ENCODE measurements at regions of chr7 and their contacts with region 1.

Region 1: GRCh38 chr7:38411404-38411803 is 138.0 kb upstream of the TARP start:
- DNase-seq: peak in 1 of 2 experiments; percentile 26
- H3K4me3 ChIP-seq: no peak overlapping the region
- H3K4me3 Mint-ChIP-seq: no peak overlapping the region
- H3K27ac Mint-ChIP-seq: no peak overlapping the region
- H3K4me1 ChIP-seq: no peaks in the 10 kb centered on the region
- H3K4me1 Mint-ChIP-seq: no peaks in the 10 kb centered on the region
- H3K27me3 ChIP-seq: no peaks in the 10 kb centered on the region
- H3K27me3 Mint-ChIP-seq: peaks cover 2% of the 10 kb centered on the region
- CTCF ChIP-seq: peak; percentile 18 to 58

Region 2: GRCh38 chr7:38360776-38361175 is 50.6 kb before region 1 on chr7:
- CTCF ChIA-PET with region 1: no interaction called
- POLR2A ChIA-PET with region 1: no interaction called
- intact Hi-C with region 1: no loop called
- DNase-seq: no peak
- H3K4me3 ChIP-seq: no peak overlapping the region
- H3K4me3 Mint-ChIP-seq: no peak overlapping the region
- H3K27ac Mint-ChIP-seq: no peak overlapping the region
- H3K4me1 ChIP-seq: no peaks in the 10 kb centered on the region
- H3K4me1 Mint-ChIP-seq: no peaks in the 10 kb centered on the region
- H3K27me3 ChIP-seq: no peaks in the 10 kb centered on the region
- H3K27me3 Mint-ChIP-seq: peaks cover under 1% of the 10 kb centered on the region
- CTCF ChIP-seq: no peak

Region 3: GRCh38 chr7:38398725-38399321 is 12.6 kb before region 1 on chr7:
- CTCF ChIA-PET with region 1: no interaction called
- POLR2A ChIA-PET with region 1: no interaction called
- intact Hi-C with region 1: loop called (anchors 1 kb)
- DNase-seq: peak in 1 of 2 experiments; percentile 55
- H3K4me3 ChIP-seq: no peak overlapping the region
- H3K4me3 Mint-ChIP-seq: no peak overlapping the region
- H3K27ac Mint-ChIP-seq: no peak overlapping the region
- H3K4me1 ChIP-seq: no peaks in the 10 kb centered on the region
- H3K4me1 Mint-ChIP-seq: peaks cover 5% of the 10 kb centered on the region
- H3K27me3 ChIP-seq: no peaks in the 10 kb centered on the region; the same call in 1 of the 2 replicates
- H3K27me3 Mint-ChIP-seq: peaks cover 14% of the 10 kb centered on the region
- CTCF ChIP-seq: peak; percentile 74 to 86

Region 4: DNA sequence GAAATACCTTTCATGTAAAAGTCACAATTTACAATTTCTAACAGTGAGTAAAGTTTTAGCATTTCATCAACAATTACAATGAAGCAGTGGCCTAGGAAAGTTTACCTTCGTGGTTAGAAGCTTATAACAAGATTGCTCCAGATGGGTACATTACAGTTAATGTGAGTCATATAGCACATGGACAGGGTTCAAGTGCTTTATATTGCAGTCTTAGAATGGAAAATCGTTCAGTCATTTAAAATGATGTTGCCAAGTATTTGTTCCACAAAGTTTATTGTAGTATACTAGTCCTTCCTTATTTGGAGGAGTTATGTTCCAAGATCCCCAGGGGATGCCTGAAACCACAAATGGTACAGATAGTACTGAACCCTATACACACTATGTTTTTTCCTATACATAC is 36.6 kb after region 1 on chr7:
- CTCF ChIA-PET with region 1: no interaction called
- POLR2A ChIA-PET with region 1: no interaction called
- intact Hi-C with region 1: no loop called
- DNase-seq: no peak
- H3K4me3 ChIP-seq: no peak overlapping the region
- H3K4me3 Mint-ChIP-seq: no peak overlapping the region
- H3K27ac Mint-ChIP-seq: no peak overlapping the region
- H3K4me1 ChIP-seq: no peaks in the 10 kb centered on the region
- H3K4me1 Mint-ChIP-seq: no peaks in the 10 kb centered on the region
- H3K27me3 ChIP-seq: no peaks in the 10 kb centered on the region; the same call in 1 of the 2 replicates
- H3K27me3 Mint-ChIP-seq: no peaks in the 10 kb centered on the region
- CTCF ChIP-seq: no peak

Region 5: DNA sequence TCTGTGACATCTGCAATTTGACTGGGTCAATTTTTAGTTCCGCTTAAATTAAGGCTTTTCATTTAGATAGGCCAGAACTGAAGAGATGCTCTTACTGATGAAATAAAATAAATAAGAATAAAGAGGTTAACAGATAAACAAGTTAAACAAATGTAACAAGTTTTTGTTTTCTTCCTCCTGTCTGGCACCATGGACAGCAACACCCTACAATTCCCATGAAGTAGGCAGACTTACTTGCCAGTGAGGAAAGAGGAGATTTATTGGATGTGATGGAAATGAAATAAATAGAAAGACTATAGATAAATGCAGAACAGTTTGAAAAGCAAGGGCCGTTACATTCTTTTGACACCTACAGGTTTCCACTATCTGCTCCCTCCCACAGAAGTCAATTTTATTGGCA is 101.3 kb after region 1 on chr7:
- CTCF ChIA-PET with region 1: no interaction called
- POLR2A ChIA-PET with region 1: no interaction called
- intact Hi-C with region 1: no loop called
- DNase-seq: no peak
- H3K4me3 ChIP-seq: no peak overlapping the region
- H3K4me3 Mint-ChIP-seq: no peak overlapping the region
- H3K27ac Mint-ChIP-seq: no peak overlapping the region
- H3K4me1 ChIP-seq: no peaks in the 10 kb centered on the region
- H3K4me1 Mint-ChIP-seq: no peaks in the 10 kb centered on the region
- H3K27me3 ChIP-seq: no peaks in the 10 kb centered on the region; the same call in 1 of the 2 replicates
- H3K27me3 Mint-ChIP-seq: peaks cover 5% of the 10 kb centered on the region
- CTCF ChIP-seq: no peak